Calu3 (cell line): ENCODE measurements at regions of chr16 and their contacts with region 1.

Region 1: DNA sequence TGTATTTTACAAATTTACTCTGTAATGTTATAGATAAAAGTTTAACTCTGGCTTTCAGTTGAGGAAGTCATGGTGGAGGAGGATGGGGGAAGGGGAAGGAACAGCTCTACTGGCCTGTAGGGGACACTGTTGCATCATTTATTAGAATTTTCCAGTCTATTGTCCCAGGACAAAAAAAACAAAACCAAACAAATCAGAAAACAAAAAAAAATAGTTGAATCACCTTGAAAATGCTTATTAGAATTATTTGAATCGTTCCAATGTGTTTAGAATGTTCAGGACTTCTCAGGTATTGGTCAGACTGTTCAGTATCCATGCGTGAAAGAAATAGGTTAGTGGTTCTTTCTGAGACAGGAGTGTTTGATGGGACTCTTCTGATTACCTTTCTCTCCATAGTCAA is 242.0 kb downstream of the FTO start:
- DNase-seq: peak; percentile 36
- H3K4me3 Mint-ChIP-seq: no peak overlapping the region
- H3K27ac Mint-ChIP-seq: no peak overlapping the region
- H3K4me1 Mint-ChIP-seq: no peaks in the 10 kb centered on the region
- H3K27me3 Mint-ChIP-seq: no peaks in the 10 kb centered on the region
- CTCF ChIP-seq: peak; percentile 78

Region 2: DNA sequence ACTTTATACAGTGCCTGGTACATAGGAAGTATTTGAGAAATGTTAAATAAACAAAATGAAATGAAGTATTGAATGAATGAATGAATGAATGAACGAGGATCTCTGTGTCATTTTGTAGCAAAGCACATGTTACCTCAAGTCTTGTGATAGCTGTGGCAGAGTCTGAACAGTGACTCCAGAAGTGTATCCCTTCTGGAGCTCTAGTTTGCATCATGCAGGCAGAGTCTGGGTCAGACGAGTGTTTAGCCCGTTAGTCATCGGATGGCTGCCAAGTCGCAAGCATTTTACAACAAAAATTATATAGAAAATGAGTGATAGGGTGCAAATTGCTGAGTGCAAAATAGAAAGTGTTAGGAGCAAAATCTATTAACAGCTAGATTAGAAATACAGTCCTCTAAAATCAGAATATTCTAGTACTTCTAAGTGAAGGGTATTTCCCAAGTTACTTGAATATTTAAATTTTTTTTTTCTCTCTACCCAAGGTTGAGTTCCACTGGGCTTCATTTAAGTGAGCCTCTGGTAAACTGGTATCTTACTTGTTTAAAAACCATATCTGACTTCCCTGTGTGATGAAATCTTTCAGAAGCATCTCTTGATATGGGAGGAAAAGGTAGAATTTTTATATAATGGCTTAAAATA is 128.8 kb before region 1 on chr16:
- CTCF ChIA-PET with region 1: no interaction called
- intact Hi-C with region 1: no loop called
- DNase-seq: no peak
- H3K4me3 Mint-ChIP-seq: no peak overlapping the region
- H3K27ac Mint-ChIP-seq: no peak overlapping the region
- H3K4me1 Mint-ChIP-seq: peaks cover 9% of the 10 kb centered on the region
- H3K27me3 Mint-ChIP-seq: no peaks in the 10 kb centered on the region
- CTCF ChIP-seq: no peak

Region 3: DNA sequence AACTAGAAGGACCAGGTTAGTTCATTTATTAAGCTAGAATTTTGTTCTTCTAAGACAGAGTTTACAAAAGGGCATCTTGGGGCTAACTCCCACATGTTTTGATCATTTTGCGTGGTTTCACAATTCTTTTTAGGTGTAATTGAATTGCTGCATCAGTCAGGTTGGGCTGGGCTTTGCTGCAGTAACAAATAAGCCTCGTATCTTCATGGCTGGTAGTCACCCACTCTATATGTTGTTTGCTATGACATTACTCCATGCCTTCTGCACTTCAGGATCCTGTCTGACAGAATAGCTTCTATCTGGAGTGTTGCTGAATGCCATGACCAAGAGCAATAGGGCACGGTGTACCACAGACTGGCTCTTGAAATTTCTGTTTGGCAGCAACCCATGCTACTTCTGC is 351.2 kb after region 1 on chr16:
- CTCF ChIA-PET with region 1: no interaction called
- intact Hi-C with region 1: no loop called
- DNase-seq: no peak
- H3K4me3 Mint-ChIP-seq: no peak overlapping the region
- H3K27ac Mint-ChIP-seq: no peak overlapping the region
- H3K4me1 Mint-ChIP-seq: no peaks in the 10 kb centered on the region
- H3K27me3 Mint-ChIP-seq: peaks cover 19% of the 10 kb centered on the region
- CTCF ChIP-seq: no peak

Region 4: GRCh38 chr16:54817446-54817845 is 871.5 kb after region 1 on chr16:
- CTCF ChIA-PET with region 1: no interaction called
- intact Hi-C with region 1: loop called (anchors 10 kb)
- DNase-seq: peak; percentile 12
- H3K4me3 Mint-ChIP-seq: no peak overlapping the region
- H3K27ac Mint-ChIP-seq: no peak overlapping the region
- H3K4me1 Mint-ChIP-seq: no peaks in the 10 kb centered on the region
- H3K27me3 Mint-ChIP-seq: peaks cover 13% of the 10 kb centered on the region
- CTCF ChIP-seq: no peak